ENCODE measurements at regions of chrX and their contacts with region 1.

Region 1: GRCh38 chrX:106952988-106953387 is 32.8 kb downstream of the CLDN2 start:
- DNase-seq: peak; percentile 10 to 46 (median 39)
- H3K4me3 ChIP-seq: no peak overlapping the region
- H3K27ac ChIP-seq: no peak overlapping the region
- H3K4me1 ChIP-seq: no peaks in the 10 kb centered on the region
- H3K27me3 ChIP-seq: peaks cover 0 to 15% (median 0%) of the 10 kb centered on the region in 5 experiments

Region 2: DNA sequence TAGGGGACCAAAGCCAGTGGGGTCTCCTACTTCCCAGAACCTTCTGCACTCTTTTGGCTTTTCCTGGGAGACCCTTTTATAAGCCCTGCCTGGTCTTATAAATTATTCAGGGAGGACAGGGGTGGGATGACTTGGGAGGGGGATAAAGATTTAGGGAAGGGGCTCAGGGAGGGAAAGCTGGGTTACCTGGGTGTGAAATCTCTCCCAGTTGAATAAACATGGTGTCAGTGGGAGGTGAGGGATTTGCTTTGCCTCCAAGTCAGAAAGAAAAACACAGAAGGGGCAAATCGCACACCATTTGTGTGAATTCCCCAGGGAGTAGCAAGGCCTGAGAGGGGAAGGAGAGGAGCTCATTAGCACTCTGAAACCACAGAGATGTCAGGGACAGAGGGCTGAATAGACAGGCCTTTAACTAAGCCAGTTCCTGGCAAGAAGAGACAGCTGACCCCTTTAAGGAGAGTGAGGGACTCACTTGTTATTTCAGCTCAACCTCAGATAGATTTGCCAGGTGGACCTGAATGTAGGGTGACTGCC is 49.6 kb before region 1 on chrX and contains the start of gene RIPPLY1:
- CTCF ChIA-PET with region 1: interaction called, 16 read pairs
- POLR2A ChIA-PET with region 1: no interaction called
- DNase-seq: no peak
- H3K4me3 ChIP-seq: no peak within 1 kb of the TSS
- H3K27ac ChIP-seq: no peak within 1 kb of the TSS
- H3K4me1 ChIP-seq: no peaks in the 10 kb centered on the region
- H3K27me3 ChIP-seq: peaks cover 0 to 56% (median 5%) of the 10 kb centered on the region in 5 experiments